ENCODE measurements at regions of chr12 and their contacts with region 1.

Region 1: GRCh38 chr12:73964641-73965040 is 573.0 kb upstream of the ATXN7L3B start:
- DNase-seq: no peak
- H3K4me3 ChIP-seq: no peak overlapping the region
- H3K27ac ChIP-seq: no peak overlapping the region
- H3K4me1 ChIP-seq: no peaks in the 10 kb centered on the region
- H3K27me3 ChIP-seq: no peaks in the 10 kb centered on the region
- CTCF ChIP-seq: no peak

Region 2: DNA sequence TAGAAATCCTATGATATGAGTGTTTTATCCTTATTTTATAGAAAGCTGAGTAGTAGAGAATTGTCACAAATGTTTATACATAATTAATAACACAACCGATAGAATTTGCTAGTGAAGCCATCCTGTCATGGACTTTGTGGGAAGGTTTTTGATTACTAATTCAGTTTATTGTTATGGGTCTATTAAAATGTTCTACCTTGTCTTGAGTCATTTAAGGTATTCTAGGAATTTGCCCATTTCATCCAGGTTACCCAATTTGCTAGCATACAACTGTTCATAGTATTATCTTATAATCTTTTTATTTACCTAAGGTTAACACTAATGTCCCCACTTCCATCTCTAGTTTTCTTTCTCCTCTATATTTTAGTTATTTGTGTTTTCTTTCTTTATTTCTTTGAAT is 19.9 kb after region 1 on chr12:
- CTCF ChIA-PET with region 1: no interaction called
- POLR2A ChIA-PET with region 1: no interaction called
- intact Hi-C with region 1: loop called (anchors 1 kb)
- DNase-seq: no peak
- H3K4me3 ChIP-seq: no peak overlapping the region
- H3K27ac ChIP-seq: no peak overlapping the region
- H3K4me1 ChIP-seq: no peaks in the 10 kb centered on the region
- H3K27me3 ChIP-seq: no peaks in the 10 kb centered on the region
- CTCF ChIP-seq: no peak

Measured in PC-9 (cell line).